Activated T-helper 2 cell treated with anti-CD3 and anti-CD28 coated beads, Interferon-gamma antibody, Interleukin-2, Interleukin-4, amounts not matched to agents 10 μg/mL and 5 μg/mL and 100 μg/mL, durations not matched to agents 14 hours and 24 hours and 36 hours (primary cell): ENCODE measurements at regions of chr17 and their contacts with region 1.

Region 1: GRCh38 chr17:716238-716637 is 1.6 kb upstream of the VPS53 start:
- DNase-seq: no peak
- H3K4me3 Mint-ChIP-seq: peak overlapping the region; percentile 33
- H3K27ac Mint-ChIP-seq: no peak overlapping the region
- H3K4me1 Mint-ChIP-seq: peaks cover 10% of the 10 kb centered on the region
- H3K27me3 Mint-ChIP-seq: peaks cover 2% of the 10 kb centered on the region

Region 2: GRCh38 chr17:732067-732901 is 16.0 kb after region 1 on chr17 and contains the start of gene TLCD3A:
- intact Hi-C with region 1: loop called (anchors 2 kb)
- DNase-seq: peak; percentile 61
- H3K4me3 Mint-ChIP-seq: peak within 1 kb of the TSS; percentile 92
- H3K27ac Mint-ChIP-seq: peak within 1 kb of the TSS; percentile 87
- H3K4me1 Mint-ChIP-seq: peaks cover 17% of the 10 kb centered on the region
- H3K27me3 Mint-ChIP-seq: no peaks in the 10 kb centered on the region
- total RNA-seq, gene TLCD3A: 38.1 and 41.0 TPM in 2 replicates

Region 3: GRCh38 chr17:752002-752619 is 35.9 kb after region 1 on chr17 and contains the start of gene GEMIN4:
- intact Hi-C with region 1: loop called (anchors 1 kb)
- DNase-seq: peak; percentile 97
- H3K4me3 Mint-ChIP-seq: peak within 1 kb of the TSS; percentile 98
- H3K27ac Mint-ChIP-seq: peak within 1 kb of the TSS; percentile 95
- H3K4me1 Mint-ChIP-seq: peaks cover 26% of the 10 kb centered on the region
- H3K27me3 Mint-ChIP-seq: no peaks in the 10 kb centered on the region
- total RNA-seq, gene GEMIN4: 62.8 and 64.2 TPM in 2 replicates